IMR-90 (cell line): ENCODE measurements at regions of chr11 and their contacts with region 1.

Region 1: GRCh38 chr11:30561691-30562415 is 24.3 kb downstream of the MPPED2 start:
- DNase-seq: peak; percentile 42
- ATAC-seq: no peak
- H3K4me3 ChIP-seq: no peak overlapping the region
- H3K27ac ChIP-seq: no peak overlapping the region
- H3K4me1 ChIP-seq: no peaks in the 10 kb centered on the region
- H3K27me3 ChIP-seq: no peaks in the 10 kb centered on the region
- CTCF ChIP-seq: no peak
- POLR2A ChIP-seq: no peak
- RAD21 ChIP-seq: no peak

Region 2: DNA sequence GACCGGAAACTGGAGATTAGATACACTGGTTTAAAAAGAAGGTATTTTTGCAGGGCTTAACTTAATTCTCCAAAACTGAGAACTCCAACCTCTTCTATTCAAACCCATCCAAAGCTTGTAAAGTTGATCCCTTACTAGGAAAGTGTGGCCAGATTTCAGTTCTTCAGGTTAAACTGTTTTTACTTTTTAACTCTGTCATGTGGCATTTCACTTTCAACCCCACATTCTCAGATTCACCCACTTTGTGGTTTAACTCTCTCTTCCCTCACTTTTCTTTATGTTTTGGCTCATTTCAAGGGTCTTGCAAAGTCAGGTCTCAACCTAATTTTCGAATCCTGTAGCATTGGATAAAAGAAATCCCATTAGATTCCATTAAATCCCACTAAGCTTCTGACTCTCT is 51.1 kb before region 1 on chr11:
- CTCF ChIA-PET with region 1: no interaction called
- POLR2A ChIA-PET with region 1: no interaction called
- dilution Hi-C with region 1: no loop called
- in situ Hi-C with region 1: loop called (anchors 5 kb)
- intact Hi-C with region 1: no loop called
- DNase-seq: no peak
- ATAC-seq: no peak
- H3K4me3 ChIP-seq: no peak overlapping the region
- H3K27ac ChIP-seq: no peak overlapping the region
- H3K4me1 ChIP-seq: no peaks in the 10 kb centered on the region
- H3K27me3 ChIP-seq: no peaks in the 10 kb centered on the region
- CTCF ChIP-seq: no peak
- POLR2A ChIP-seq: no peak
- RAD21 ChIP-seq: no peak

Region 3: DNA sequence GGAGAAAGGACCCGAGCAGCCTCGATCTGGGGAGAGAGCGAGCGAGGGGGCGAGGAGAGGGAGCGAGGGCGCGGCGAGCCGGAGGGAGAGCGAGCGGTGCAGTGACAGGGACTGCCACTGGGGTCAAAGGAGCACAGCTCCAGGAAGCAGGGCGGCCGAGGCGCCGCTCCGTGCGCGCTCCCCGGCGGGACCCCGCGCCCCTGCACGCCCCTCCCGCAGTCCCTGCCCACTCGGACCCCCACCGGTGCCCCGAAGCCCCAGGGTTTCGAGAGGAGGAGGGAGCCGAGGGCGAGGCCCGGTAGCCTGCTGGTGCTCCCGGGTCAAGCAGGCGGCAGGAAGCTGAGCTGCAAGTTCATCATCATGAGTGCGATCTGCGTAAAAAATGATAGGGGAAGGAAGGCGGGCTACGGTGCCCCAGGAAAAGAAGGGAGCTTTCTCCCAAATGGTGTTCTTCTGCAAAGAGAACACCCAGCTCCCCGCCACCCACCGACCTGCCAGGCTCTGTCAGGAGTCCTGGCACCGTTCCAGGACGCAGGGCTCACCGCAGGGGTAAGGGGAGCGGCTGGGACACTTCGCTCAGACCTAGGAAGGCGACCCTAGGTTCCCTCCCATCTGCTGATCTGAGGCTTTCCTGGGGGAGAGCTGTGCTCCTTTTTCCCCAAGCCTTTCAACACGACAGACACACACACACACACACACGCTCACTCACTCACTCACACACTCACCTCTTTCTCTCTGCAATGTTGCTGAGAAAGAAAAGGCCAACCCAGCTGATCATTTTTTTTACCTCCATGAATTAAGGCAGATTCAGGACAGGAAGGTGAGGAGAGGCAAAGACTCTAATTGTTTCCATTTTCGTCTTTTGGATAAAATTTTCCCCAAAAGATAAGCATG is 24.6 kb after region 1 on chr11 and contains the start of gene MPPED2:
- CTCF ChIA-PET with region 1: no interaction called
- POLR2A ChIA-PET with region 1: no interaction called
- dilution Hi-C with region 1: no loop called
- in situ Hi-C with region 1: no loop called
- intact Hi-C with region 1: no loop called
- DNase-seq: no peak
- ATAC-seq: peak; percentile 56
- H3K4me3 ChIP-seq: peak within 1 kb of the TSS; percentile 29
- H3K27ac ChIP-seq: no peak within 1 kb of the TSS
- H3K4me1 ChIP-seq: no peaks in the 10 kb centered on the region
- H3K27me3 ChIP-seq: peaks cover 43% of the 10 kb centered on the region
- CTCF ChIP-seq: no peak; the same call in 1 of the 2 replicates
- POLR2A ChIP-seq: no peak
- RAD21 ChIP-seq: no peak
- total RNA-seq, gene MPPED2: not detected in 2 replicates